ENCODE measurements at regions of chr4 and their contacts with region 1.

Region 1: GRCh38 chr4:140359562-140360427 is 13.7 kb upstream of the SCOC start:
- DNase-seq: peak; percentile 64
- H3K4me3 Mint-ChIP-seq: no peak overlapping the region
- H3K27ac Mint-ChIP-seq: no peak overlapping the region
- H3K4me1 Mint-ChIP-seq: no peaks in the 10 kb centered on the region
- H3K27me3 Mint-ChIP-seq: peaks cover 13% of the 10 kb centered on the region

Region 2: GRCh38 chr4:139734875-139735380 is 624.9 kb before region 1 on chr4:
- intact Hi-C with region 1: loop called (anchors 10 kb)
- DNase-seq: peak; percentile 35
- H3K4me3 Mint-ChIP-seq: peak overlapping the region; percentile 49
- H3K27ac Mint-ChIP-seq: no peak overlapping the region
- H3K4me1 Mint-ChIP-seq: peaks cover 11% of the 10 kb centered on the region
- H3K27me3 Mint-ChIP-seq: peaks cover 54% of the 10 kb centered on the region

Region 3: GRCh38 chr4:140012688-140013486 is 346.9 kb before region 1 on chr4:
- intact Hi-C with region 1: loop called (anchors 1 kb)
- DNase-seq: peak; percentile 29
- H3K4me3 Mint-ChIP-seq: no peak overlapping the region
- H3K27ac Mint-ChIP-seq: no peak overlapping the region
- H3K4me1 Mint-ChIP-seq: peaks cover 9% of the 10 kb centered on the region
- H3K27me3 Mint-ChIP-seq: peaks cover 42% of the 10 kb centered on the region

Region 4: DNA sequence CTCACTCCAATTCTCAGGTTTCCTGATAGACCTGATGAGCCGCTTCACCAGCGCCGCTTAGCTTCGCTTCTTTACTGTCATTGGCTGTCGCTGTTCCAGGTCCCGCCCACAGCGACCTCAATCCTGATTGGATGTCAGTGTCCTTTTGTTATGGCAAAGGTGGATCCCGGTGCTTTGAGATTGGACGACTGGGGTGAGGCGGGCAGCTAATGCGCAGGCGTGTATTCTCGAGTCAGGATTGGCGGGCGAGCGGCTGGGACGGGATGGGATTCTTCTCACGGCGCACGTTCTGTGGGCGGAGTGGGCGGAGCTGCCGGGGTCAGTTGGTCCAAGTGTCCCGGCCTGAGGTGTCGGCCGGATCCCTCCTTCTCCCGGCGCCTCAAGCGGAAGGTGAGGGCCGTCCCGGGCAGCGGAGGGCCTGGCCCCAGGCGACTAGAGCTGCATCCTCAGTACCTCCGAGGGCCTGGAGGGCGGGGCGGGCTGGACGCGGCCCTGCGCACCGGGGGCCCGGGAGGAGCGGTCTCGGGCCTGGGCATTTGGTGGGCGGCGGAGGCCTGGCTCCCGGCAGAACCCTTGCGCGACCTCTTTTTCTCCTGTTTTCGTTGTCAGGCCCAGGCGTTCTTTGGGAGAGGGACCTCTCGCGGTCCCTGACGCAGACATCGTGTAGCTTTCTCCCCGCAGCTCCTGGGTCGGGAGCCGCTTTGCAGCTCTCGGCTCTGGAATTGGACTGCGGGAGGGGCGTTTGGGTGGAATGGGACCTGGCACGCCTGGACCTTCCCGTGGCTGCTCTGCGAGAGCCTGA is 13.7 kb after region 1 on chr4 and contains the start of gene SCOC:
- intact Hi-C with region 1: loop called (anchors 1 kb)
- DNase-seq: peak; percentile 97
- H3K4me3 Mint-ChIP-seq: no peak within 1 kb of the TSS
- H3K27ac Mint-ChIP-seq: no peak within 1 kb of the TSS
- H3K4me1 Mint-ChIP-seq: peaks cover 28% of the 10 kb centered on the region
- H3K27me3 Mint-ChIP-seq: peaks cover 10% of the 10 kb centered on the region
- total RNA-seq, gene SCOC: 36.7 and 38.0 TPM in 2 replicates

Region 5: DNA sequence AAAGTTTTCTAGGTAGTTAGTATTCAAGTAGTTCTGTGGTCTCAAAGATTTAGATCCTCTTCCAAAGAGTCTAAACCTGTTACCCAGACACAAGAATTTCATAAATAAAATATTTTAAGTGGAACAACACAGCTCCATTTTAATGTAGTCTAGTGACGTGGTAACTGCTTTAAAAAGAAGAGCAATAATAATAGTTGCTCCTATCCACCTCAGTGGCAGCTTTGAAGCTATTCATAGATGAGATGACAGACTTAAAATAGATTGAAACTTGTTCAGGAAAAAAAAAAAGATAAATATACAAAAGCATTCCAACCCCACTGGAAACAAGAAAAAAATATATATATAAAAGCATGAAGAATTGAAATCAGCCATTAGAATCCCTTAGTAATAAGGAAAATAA is 28.2 kb after region 1 on chr4:
- intact Hi-C with region 1: no loop called
- DNase-seq: no peak
- H3K4me3 Mint-ChIP-seq: no peak overlapping the region
- H3K27ac Mint-ChIP-seq: no peak overlapping the region
- H3K4me1 Mint-ChIP-seq: no peaks in the 10 kb centered on the region
- H3K27me3 Mint-ChIP-seq: peaks cover 26% of the 10 kb centered on the region

Region 6: GRCh38 chr4:140609548-140610425 is 250.0 kb after region 1 on chr4:
- intact Hi-C with region 1: loop called (anchors 1 kb)
- DNase-seq: no peak
- H3K4me3 Mint-ChIP-seq: no peak overlapping the region
- H3K27ac Mint-ChIP-seq: no peak overlapping the region
- H3K4me1 Mint-ChIP-seq: no peaks in the 10 kb centered on the region
- H3K27me3 Mint-ChIP-seq: peaks cover 10% of the 10 kb centered on the region

Region 7: DNA sequence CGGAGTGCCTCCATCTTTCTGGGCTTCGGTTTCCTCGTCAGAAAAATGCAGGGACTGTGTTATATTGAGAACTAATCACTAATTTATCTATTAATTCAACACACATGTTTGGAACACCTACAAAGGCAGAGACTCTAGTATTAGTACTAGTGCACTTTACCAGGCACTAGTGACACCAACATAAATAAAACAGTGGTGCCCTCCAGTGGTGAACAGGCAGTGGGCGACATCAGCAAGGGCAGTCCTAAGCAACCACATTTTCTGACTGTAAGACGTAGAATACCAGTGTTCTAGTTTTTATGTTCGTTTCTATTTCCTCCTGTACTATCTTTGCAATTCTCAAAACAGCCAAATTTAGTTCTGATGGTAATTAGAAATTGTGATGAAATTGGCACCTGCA is 278.0 kb after region 1 on chr4:
- intact Hi-C with region 1: loop called (anchors 1 kb)
- DNase-seq: peak; percentile 19
- H3K4me3 Mint-ChIP-seq: no peak overlapping the region
- H3K27ac Mint-ChIP-seq: no peak overlapping the region
- H3K4me1 Mint-ChIP-seq: no peaks in the 10 kb centered on the region
- H3K27me3 Mint-ChIP-seq: peaks cover 9% of the 10 kb centered on the region

Region 8: GRCh38 chr4:140851032-140851636 is 491.3 kb after region 1 on chr4:
- intact Hi-C with region 1: loop called (anchors 10 kb)
- DNase-seq: no peak
- H3K4me3 Mint-ChIP-seq: no peak overlapping the region
- H3K27ac Mint-ChIP-seq: no peak overlapping the region
- H3K4me1 Mint-ChIP-seq: no peaks in the 10 kb centered on the region
- H3K27me3 Mint-ChIP-seq: peaks cover 14% of the 10 kb centered on the region